ENCODE measurements at regions of chr9 and their contacts with region 1.

Region 1: GRCh38 chr9:113657703-113658544 is 194.4 kb downstream of the RGS3 start:
- DNase-seq: peak; percentile 81

Region 2: DNA sequence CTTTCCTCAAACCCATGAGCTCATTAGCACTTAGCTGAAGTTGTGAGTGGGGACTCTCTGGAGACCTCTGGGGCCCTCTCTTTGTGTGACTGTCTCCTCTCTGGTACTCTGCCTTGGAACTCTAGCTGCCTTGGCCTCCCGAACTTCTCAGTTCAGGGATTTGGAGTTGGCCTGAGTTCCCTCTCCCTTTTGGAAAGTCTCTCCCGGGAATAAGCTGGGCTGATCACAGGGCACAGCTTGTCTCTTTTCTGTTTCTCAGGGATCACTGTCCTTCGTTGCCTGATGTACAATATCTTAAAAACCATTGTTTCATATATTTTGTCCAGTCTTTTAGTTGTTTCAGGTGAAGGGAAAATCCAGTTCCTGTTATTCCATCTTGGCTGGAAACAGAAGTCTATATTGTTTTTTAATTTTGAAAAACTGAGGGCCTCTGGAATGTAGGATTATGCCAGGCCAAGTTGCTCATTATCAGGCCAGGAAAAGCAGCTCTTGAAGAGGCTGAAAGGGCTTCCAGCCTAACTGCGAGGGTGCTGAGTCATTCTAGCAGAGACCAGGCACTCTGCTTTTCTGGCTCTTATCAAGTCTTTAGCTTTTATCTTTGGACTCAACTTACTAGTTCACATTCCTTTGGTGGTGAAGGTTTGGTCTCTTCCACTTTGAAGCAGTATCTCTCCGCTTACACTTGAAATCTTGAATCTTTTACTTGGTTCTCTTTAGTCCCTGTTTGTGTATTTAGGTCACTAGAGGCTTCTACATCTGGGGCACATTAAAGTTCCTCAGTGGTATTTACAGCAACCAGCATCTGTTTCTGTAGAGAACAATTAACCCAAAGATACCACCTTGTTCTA is 202.8 kb before region 1 on chr9:
- in situ Hi-C with region 1: loop called (anchors 25 kb)
- DNase-seq: no peak

Region 3: GRCh38 chr9:113591001-113591898 is 66.7 kb before region 1 on chr9:
- in situ Hi-C with region 1: loop called (anchors 10 kb)
- DNase-seq: peak; percentile 87

Region 4: GRCh38 chr9:114317665-114318357 is 659.9 kb after region 1 on chr9:
- in situ Hi-C with region 1: no loop called
- DNase-seq: peak; percentile 18

Measured in KBM-7 (cell line).